ENCODE measurements at regions of chr12 and their contacts with region 1.

Region 1: DNA sequence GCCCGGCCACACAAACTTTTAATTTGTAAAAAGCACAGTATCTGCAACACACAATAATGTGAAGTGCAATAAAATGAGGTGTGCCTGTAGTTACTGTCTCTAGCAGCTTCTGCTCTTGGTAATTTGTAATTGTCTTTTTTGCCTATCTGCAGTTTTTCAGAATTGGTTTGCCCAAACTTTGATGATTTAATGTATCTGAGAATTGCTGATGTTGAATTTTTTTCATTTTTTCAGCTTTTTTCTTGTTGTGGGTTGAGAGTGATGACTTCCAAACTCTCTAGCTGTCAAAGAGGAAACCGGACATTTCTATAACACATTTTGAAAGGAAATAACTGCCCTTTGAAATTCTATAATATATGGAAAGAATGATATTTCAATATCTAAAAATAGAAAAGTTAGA is 236.9 kb downstream of the RERGL start:
- DNase-seq: no peak
- H3K4me3 ChIP-seq: no peak overlapping the region
- CTCF ChIP-seq: no peak
- POLR2A ChIP-seq: no peak

Region 2: GRCh38 chr12:17588968-17589367 is 264.1 kb before region 1 on chr12:
- intact Hi-C with region 1: no loop called
- DNase-seq: no peak
- H3K4me3 ChIP-seq: no peak overlapping the region
- CTCF ChIP-seq: no peak
- POLR2A ChIP-seq: no peak

Region 3: GRCh38 chr12:17759982-17760381 is 93.1 kb before region 1 on chr12:
- intact Hi-C with region 1: loop called (anchors 5 kb)
- DNase-seq: no peak
- H3K4me3 ChIP-seq: no peak overlapping the region
- CTCF ChIP-seq: no peak
- POLR2A ChIP-seq: no peak

Measured in lower leg skin (tissue), 4 donors.